PC-9 (cell line): ENCODE measurements at regions of chr16 and their contacts with region 1.

Region 1: DNA sequence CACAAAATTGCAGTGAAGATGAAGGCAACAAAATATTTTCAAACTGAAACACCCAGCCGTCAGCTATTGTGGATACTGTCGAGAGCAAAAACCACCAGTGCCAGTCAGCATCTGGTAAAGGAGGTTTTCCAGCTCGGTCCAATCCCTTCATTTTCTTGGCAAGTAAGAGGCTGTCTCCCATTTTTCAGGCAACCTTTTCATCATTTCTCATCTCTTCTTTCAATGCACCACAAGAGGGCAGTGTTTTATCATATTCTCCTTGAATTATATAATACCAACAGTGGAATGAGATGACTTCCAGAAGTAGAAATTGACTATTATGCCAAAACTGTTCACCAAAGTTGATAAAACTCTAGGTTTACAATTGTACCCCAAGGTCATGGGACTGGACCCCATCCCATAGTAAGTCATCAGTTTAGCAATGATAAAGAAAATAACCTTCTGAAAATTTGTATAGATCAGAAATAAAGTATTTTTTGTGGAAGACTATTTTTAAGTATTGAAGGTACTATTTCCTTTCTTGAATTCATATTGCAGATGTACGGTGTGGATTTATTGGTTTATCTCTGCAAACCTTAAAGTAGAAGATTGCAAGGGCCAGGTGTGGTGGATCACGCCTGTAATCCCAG is 16.8 kb downstream of the NQO1 start:
- DNase-seq: peak in 1 of 2 experiments; percentile 51
- H3K4me3 ChIP-seq: no peak overlapping the region
- H3K27ac ChIP-seq: no peak overlapping the region
- H3K4me1 ChIP-seq: peaks cover 18% of the 10 kb centered on the region
- H3K27me3 ChIP-seq: no peaks in the 10 kb centered on the region
- CTCF ChIP-seq: peak; percentile 81

Region 2: DNA sequence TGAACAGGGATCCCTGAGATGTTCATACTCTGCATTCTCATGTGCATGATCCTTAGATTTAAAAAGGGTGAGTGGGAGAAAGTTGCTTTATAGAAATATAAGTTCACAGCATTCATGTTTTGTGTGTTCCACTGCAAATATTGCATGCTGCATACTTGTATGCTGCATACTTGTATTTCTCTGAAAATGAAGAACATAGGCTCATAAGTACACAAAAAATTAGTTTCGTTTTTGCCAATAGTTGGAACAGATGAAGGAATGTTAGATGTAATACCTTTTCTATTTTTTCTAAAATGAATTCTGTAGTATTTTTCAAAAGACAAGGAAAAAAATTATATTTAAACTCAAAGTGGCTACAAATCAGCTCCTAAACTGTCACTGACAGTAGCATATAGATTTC is 64.8 kb before region 1 on chr16:
- CTCF ChIA-PET with region 1: no interaction called
- POLR2A ChIA-PET with region 1: no interaction called
- intact Hi-C with region 1: no loop called
- DNase-seq: no peak
- H3K4me3 ChIP-seq: no peak overlapping the region
- H3K27ac ChIP-seq: no peak overlapping the region
- H3K4me1 ChIP-seq: no peaks in the 10 kb centered on the region
- H3K27me3 ChIP-seq: no peaks in the 10 kb centered on the region
- CTCF ChIP-seq: no peak

Region 3: DNA sequence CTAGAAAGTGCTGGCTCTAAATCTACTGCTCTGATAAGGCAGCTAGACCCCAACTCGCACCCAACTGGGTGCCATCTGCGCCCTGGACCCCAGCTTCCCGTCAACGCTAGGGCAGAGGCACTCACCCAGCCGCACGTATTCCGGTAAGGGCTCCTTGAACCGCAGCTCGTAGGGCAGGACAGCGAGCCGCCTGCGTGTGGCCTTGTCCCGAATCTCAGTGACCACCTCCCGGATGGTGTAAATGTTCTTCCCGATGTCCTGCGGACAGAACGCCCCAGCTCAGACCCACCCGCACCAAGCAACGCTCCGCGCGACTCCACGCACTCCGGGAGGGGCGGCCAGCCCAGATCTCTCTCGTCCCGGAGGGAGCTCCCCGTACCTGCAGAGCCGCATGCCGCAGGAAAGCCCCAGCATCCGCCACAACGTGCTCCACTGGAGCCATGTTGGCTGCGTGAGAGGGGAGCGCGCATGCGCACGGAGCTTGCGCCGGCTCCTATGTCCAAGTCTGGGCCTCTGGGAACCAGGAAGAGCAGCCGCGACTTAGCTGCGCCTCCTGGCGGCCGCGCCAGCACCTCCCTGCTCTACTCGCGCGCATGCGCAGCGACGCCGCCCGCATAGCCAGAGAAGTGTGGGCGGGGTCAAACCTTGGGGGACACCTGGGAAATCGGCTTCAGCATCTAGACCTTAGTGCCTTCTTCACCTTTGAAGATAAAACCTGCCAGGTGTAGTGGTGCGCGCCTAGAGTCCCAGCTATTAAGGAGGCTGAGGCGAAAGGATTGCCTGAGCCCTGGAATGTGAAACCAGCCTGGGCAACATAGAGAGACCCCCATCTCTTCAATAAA is 45.1 kb after region 1 on chr16 and contains the start of gene NOB1:
- CTCF ChIA-PET with region 1: interaction called, 6 read pairs
- POLR2A ChIA-PET with region 1: no interaction called
- intact Hi-C with region 1: loop called (anchors 1 kb)
- DNase-seq: peak; percentile 91 to 97
- H3K4me3 ChIP-seq: peak within 1 kb of the TSS; percentile 95
- H3K27ac ChIP-seq: peak within 1 kb of the TSS; percentile 52
- H3K4me1 ChIP-seq: peaks cover 20% of the 10 kb centered on the region
- H3K27me3 ChIP-seq: no peaks in the 10 kb centered on the region
- CTCF ChIP-seq: peak; percentile 94
- total RNA-seq, gene NOB1: 66.9 and 93.2 TPM in 2 replicates

Region 4: DNA sequence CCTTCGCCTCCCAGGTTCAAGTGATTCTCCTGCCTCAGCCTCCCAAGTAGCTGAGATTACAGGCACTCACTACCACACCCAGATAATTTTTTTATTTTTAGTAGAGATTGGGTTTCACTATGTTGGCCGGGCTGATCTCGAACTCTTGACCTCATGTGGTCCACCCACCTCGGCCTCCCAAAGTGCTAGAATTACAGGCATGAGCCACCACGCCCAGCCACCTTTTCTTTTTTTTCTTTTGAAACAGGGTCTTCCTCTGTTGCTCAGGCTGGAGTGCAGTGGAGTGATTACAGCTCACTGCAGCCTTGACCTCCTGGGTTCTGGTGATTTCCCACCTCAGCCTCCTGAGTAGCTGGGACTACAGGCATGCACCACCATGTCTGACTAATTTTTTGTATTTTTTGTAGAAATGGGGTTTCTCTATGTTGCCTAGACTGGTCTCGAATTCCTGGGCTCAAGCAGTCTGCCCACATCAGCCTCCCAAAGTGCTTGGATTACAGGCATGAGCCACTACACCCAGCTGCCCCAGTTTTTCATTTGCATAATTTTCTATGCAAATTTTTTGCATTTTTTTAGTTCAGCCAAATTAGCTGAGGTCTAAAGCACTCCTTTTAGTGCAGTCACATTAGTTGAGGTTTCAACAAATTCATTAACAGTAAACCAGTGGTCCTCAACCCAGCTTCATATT is 63.8 kb after region 1 on chr16:
- CTCF ChIA-PET with region 1: no interaction called
- POLR2A ChIA-PET with region 1: no interaction called
- intact Hi-C with region 1: no loop called
- DNase-seq: peak in 1 of 2 experiments; percentile 8
- H3K4me3 ChIP-seq: no peak overlapping the region
- H3K27ac ChIP-seq: no peak overlapping the region
- H3K4me1 ChIP-seq: 0 out of 2 replicates have a peak, but pooled peaks cover 14% of the 10 kb centered on the region
- H3K27me3 ChIP-seq: no peaks in the 10 kb centered on the region
- CTCF ChIP-seq: no peak

Region 5: GRCh38 chr16:69823831-69824563 is 114.4 kb after region 1 on chr16:
- CTCF ChIA-PET with region 1: interaction called, 10 read pairs
- POLR2A ChIA-PET with region 1: no interaction called
- intact Hi-C with region 1: no loop called
- DNase-seq: no peak
- H3K4me3 ChIP-seq: no peak overlapping the region
- H3K27ac ChIP-seq: no peak overlapping the region
- H3K4me1 ChIP-seq: no peaks in the 10 kb centered on the region
- H3K27me3 ChIP-seq: no peaks in the 10 kb centered on the region
- CTCF ChIP-seq: no peak